H1 (cell line): ENCODE measurements at regions of chr1 and their contacts with region 1.

Region 1: GRCh38 chr1:168342572-168343280 is 62.0 kb downstream of the TBX19 start:
- DNase-seq: peak; percentile 77 to 86
- H3K4me3 ChIP-seq: peak overlapping the region; percentile 17 to 55 (median 48); a peak in 6 of 8 replicates
- H3K27ac ChIP-seq: no peak overlapping the region
- H3K4me1 ChIP-seq: no peaks in the 10 kb centered on the region
- H3K27me3 ChIP-seq: no peaks in the 10 kb centered on the region
- CTCF ChIP-seq: peak; percentile 85 to 89 (median 86)
- EP300 ChIP-seq: no peak
- POLR2A ChIP-seq: no peak
- RAD21 ChIP-seq: peak; percentile 93 to 96

Region 2: GRCh38 chr1:168234846-168235547 is 107.7 kb before region 1 on chr1:
- CTCF ChIA-PET with region 1: interaction called, 26 read pairs
- POLR2A ChIA-PET with region 1: interaction called, 3 read pairs
- DNase-seq: no peak
- H3K4me3 ChIP-seq: no peak overlapping the region
- H3K27ac ChIP-seq: no peak overlapping the region
- H3K4me1 ChIP-seq: no peaks in the 10 kb centered on the region
- H3K27me3 ChIP-seq: no peaks in the 10 kb centered on the region
- CTCF ChIP-seq: peak; percentile 49 to 89 (median 81)
- EP300 ChIP-seq: no peak
- POLR2A ChIP-seq: no peak
- RAD21 ChIP-seq: peak; percentile 69 to 83

Region 3: GRCh38 chr1:168321945-168322344 is 20.8 kb before region 1 on chr1:
- CTCF ChIA-PET with region 1: interaction called, 10 read pairs
- POLR2A ChIA-PET with region 1: no interaction called
- DNase-seq: no peak
- H3K4me3 ChIP-seq: no peak overlapping the region
- H3K27ac ChIP-seq: no peak overlapping the region
- H3K4me1 ChIP-seq: peaks cover 0 to 9% (median 1%) of the 10 kb centered on the region in 4 experiments; a peak in 3 of 7 replicates
- H3K27me3 ChIP-seq: no peaks in the 10 kb centered on the region
- CTCF ChIP-seq: no peak
- EP300 ChIP-seq: no peak
- POLR2A ChIP-seq: no peak
- RAD21 ChIP-seq: peak in 1 of 2 experiments; percentile 29; a peak in 1 of 4 replicates

Region 4: GRCh38 chr1:168360151-168361021 is 17.7 kb after region 1 on chr1:
- CTCF ChIA-PET with region 1: interaction called, 42 read pairs
- POLR2A ChIA-PET with region 1: interaction called, 3 read pairs
- DNase-seq: no peak
- H3K4me3 ChIP-seq: no peak overlapping the region
- H3K27ac ChIP-seq: no peak overlapping the region
- H3K4me1 ChIP-seq: no peaks in the 10 kb centered on the region
- H3K27me3 ChIP-seq: no peaks in the 10 kb centered on the region
- CTCF ChIP-seq: no peak
- EP300 ChIP-seq: no peak
- POLR2A ChIP-seq: no peak
- RAD21 ChIP-seq: no peak

Region 5: DNA sequence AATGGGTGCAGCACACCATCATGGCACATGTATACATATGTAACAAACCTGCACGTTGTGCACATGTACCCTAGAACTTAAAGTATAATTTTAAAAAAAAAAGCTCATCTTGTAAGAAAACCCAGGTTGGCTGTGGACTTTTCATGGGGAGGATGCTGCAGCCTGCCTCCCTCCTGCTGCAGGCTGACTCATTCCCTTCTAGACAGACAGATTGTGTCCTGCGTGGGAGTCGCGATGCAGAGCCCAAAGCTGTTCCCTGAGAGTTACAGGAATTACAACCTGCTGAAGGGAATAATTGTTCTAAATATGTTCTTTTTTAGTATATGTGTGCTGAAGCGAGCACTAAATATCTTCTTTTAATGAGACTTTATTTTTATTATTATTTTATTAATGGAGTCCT is 31.1 kb after region 1 on chr1:
- CTCF ChIA-PET with region 1: interaction called, 32 read pairs
- POLR2A ChIA-PET with region 1: no interaction called
- DNase-seq: no peak
- H3K4me3 ChIP-seq: no peak overlapping the region
- H3K27ac ChIP-seq: no peak overlapping the region
- H3K4me1 ChIP-seq: no peaks in the 10 kb centered on the region
- H3K27me3 ChIP-seq: no peaks in the 10 kb centered on the region
- CTCF ChIP-seq: no peak
- EP300 ChIP-seq: no peak
- POLR2A ChIP-seq: no peak
- RAD21 ChIP-seq: no peak

Region 6: DNA sequence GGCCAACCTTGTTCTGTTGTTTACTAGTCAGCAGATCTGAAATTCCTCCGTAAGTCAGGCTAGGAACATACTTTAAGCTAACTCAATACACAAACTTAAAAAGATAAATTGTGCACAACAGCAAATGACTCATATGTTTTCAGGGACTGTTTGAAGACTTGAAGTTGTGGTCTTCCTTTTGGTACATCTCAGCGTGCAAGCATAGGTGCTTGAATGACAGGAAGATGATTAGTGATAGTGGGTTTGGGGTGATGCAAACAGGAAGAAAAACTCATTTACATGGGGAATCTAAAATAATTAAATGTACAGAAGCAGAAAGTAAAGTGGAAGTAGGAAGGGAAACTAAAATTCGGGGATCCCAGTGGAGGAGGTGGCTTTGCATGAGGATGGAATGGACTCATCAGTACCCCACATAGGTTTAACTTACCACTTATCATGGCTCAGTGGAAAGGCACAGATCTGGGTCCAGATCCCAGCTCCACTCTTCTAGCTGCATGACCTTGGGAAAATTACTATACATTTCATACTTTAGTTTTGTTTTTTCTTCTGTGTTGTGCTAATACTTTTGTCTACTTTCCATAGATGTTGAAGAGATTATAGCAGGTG is 78.8 kb after region 1 on chr1:
- CTCF ChIA-PET with region 1: interaction called, 10 read pairs
- POLR2A ChIA-PET with region 1: no interaction called
- DNase-seq: no peak
- H3K4me3 ChIP-seq: no peak overlapping the region
- H3K27ac ChIP-seq: no peak overlapping the region
- H3K4me1 ChIP-seq: no peaks in the 10 kb centered on the region
- H3K27me3 ChIP-seq: no peaks in the 10 kb centered on the region
- CTCF ChIP-seq: no peak
- EP300 ChIP-seq: no peak
- POLR2A ChIP-seq: no peak
- RAD21 ChIP-seq: no peak

Region 7: DNA sequence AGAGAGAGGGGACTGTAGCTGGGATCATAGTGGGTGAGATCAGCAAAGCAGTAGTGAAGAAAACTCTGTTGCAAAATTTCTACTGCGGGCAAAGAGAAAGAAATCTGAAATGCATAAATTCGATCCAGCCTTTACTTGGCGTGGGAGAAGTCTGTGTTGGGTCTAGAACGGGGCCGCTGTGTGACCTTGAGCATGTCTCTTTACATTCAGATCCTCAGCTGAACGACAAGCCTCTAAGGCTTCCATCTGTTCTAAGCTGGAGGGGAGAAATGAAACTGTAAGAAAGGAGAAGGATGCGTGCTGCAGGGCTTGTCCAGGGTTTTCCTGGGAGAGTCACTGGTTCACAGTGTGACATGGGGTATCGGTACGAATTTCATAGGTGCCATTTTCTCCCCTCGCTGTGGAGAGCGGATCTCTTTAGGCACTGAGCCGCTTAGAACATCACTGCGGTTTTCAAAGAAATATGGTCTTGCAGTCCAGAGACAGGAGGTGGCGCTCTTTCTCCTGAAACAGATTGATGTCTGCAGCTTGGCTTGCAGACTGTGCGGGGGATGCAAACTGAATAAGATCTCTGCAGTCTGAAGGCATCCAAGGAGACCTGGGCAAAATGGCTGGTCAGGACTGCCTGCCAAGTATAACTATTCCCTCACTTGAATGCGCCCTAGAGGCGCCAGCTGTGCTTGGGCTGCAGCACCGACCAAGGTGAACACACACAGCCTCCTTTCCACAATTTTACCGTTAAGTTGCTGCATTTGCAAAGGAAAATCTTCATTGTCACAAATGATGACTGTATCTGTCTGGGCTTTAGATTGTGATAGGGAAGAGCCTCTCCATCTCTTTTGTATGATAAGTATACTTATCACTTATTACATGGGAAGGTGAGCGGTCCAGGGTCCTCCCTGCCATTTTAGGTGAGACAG is 97.0 kb after region 1 on chr1:
- CTCF ChIA-PET with region 1: interaction called, 21 read pairs
- POLR2A ChIA-PET with region 1: no interaction called
- DNase-seq: peak; percentile 61 to 82
- H3K4me3 ChIP-seq: 0 out of 8 replicates have a peak overlapping the region, but pooled peaks of 1 of the 4 experiments have one; percentile 13
- H3K27ac ChIP-seq: no peak overlapping the region
- H3K4me1 ChIP-seq: 0 out of 7 replicates have a peak, but pooled peaks cover 0 to 2% (median 0%) of the 10 kb centered on the region in 4 experiments
- H3K27me3 ChIP-seq: no peaks in the 10 kb centered on the region
- CTCF ChIP-seq: peak; percentile 58 to 94 (median 87)
- EP300 ChIP-seq: no peak
- POLR2A ChIP-seq: no peak
- RAD21 ChIP-seq: peak; percentile 96 to 98